PC-3 (cell line): ENCODE measurements at regions of chr18 and their contacts with region 1.

Region 1: DNA sequence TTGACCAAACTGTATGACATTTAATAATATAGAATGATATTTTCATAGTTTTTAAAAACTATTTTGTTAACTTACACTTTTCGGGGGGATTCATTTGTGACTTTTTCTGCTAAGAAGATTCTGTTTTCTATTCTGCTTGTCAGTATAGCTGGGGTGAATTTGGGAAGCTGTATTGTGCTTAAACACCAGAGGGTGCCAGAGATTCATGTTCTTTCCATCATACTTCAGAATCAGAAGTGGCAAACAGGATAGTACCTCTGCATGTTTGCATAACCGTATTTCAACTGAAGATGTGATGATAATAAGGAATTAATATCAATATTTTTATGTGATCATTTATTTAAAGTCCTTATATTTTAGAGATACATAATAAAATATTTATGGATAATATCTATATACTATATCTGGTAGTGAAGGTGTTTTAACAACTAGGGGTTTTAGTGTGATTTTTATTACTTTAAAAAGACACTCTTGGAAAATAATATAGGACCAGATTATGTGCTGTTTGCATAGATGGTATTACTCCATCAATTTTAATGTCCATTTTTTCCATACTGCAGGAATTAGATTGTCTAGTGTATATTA is 81.0 kb downstream of the TAF4B start:
- DNase-seq: peak; percentile 75
- ATAC-seq: peak; percentile 75
- H3K4me3 ChIP-seq: no peak overlapping the region
- H3K27ac ChIP-seq: no peak overlapping the region
- H3K4me1 ChIP-seq: peaks cover 4% of the 10 kb centered on the region; the same call in 1 of the 2 replicates
- H3K27me3 ChIP-seq: no peaks in the 10 kb centered on the region
- CTCF ChIP-seq: peak; percentile 71

Region 2: GRCh38 chr18:26159353-26159752 is 147.9 kb before region 1 on chr18:
- CTCF ChIA-PET with region 1: no interaction called
- POLR2A ChIA-PET with region 1: no interaction called
- intact Hi-C with region 1: no loop called
- DNase-seq: peak; percentile 19
- ATAC-seq: no peak
- H3K4me3 ChIP-seq: no peak overlapping the region
- H3K27ac ChIP-seq: no peak overlapping the region
- H3K4me1 ChIP-seq: no peaks in the 10 kb centered on the region
- H3K27me3 ChIP-seq: peaks cover 23% of the 10 kb centered on the region; the same call in 1 of the 2 replicates
- CTCF ChIP-seq: peak; percentile 50

Region 3: DNA sequence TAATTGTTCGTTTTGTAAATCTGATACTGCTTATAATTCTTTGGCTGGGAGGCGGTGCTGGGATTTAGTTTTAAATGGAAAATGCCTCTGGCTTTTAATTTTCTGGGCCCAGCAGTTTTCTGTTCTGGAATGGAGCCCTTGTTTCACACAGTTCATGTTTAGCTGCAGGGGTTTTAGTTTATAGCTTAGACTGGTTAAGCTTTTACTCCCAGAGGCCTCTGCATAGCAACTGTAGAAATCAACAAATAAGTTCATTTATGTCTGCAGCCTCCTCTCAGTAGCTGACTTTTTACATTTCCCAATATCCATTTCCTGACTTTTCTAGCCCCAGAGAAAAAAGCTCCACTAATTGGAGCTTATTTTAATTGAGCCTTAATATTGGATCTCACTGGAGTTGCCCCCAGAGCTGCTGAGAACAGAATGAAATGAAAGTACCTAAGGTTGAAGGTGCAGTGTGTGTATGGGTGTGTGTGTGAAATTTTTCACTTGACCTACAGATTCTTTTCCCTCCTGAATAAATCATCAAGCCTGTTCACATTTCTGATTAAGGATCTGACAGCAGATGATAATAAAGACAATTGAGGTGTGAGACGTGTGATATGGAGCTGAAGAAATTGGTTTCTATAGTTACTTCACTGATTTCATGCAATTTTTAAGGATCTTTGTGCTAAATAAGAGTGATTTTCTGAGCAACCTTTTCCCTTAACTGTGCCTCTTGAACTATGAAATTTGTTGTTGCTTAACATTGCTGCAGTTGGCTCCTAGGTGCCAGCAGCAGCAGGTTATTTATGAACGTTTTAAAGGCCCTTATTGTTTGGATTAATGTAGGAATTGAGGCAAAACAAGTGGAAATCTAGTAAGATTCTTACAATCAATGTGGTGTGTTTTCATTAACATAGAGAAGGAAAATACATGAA is 28.5 kb after region 1 on chr18:
- CTCF ChIA-PET with region 1: interaction called, 9 read pairs
- POLR2A ChIA-PET with region 1: no interaction called
- intact Hi-C with region 1: loop called (anchors 1 kb)
- DNase-seq: no peak
- ATAC-seq: no peak
- H3K4me3 ChIP-seq: no peak overlapping the region
- H3K27ac ChIP-seq: no peak overlapping the region
- H3K4me1 ChIP-seq: no peaks in the 10 kb centered on the region
- H3K27me3 ChIP-seq: no peaks in the 10 kb centered on the region
- CTCF ChIP-seq: no peak

Region 4: GRCh38 chr18:26458526-26459232 is 151.4 kb after region 1 on chr18:
- CTCF ChIA-PET with region 1: no interaction called
- POLR2A ChIA-PET with region 1: no interaction called
- intact Hi-C with region 1: loop called (anchors 10 kb)
- DNase-seq: peak; percentile 20
- ATAC-seq: peak; percentile 18; the same call in 1 of the 2 replicates
- H3K4me3 ChIP-seq: no peak overlapping the region
- H3K27ac ChIP-seq: 0 out of 2 replicates have a peak overlapping the region, but pooled peaks have one; percentile 6
- H3K4me1 ChIP-seq: peaks cover 15% of the 10 kb centered on the region
- H3K27me3 ChIP-seq: no peaks in the 10 kb centered on the region
- CTCF ChIP-seq: no peak

Region 5: DNA sequence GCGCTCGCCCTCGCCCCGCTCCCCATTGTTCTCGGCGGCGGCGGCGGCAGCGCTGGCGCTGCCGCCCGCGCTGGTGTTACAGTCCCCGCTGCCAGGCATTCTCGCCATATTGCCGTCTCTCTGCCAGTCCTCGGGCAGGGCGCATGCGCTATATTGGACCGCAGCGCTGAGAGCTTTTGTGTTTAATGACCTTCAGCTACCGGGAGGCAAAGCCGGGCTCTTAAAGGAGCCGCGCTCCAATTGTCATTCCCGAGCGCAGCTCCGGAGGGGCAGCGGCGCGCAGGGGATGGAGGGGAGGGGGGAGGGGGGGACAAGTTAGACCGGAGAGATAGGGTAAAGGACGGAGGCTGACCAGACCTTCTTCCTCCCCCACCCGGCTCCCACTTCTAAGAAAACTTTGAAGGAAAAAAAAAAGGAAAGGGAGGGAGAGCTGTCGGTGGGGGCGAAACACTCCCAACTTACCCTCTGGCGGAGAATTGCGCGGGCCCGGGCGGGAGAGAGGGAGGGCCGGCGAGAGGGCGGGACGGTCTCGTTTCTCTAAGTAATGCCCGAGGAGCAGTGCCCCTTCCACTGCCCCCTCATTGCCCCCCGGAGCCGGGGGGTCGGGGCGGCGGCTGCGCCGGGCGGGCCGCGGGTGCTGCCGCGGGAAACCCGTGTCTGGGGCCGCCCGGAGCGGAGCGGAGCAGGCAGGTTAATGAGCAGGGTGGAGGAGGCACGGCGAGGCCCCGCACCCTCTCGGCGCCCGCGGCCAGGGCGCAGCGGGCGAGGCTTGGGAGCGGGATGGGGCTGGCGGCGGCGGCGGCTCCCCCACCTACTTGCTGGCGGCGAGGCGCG is 241.4 kb after region 1 on chr18 and contains the start of gene KCTD1:
- CTCF ChIA-PET with region 1: no interaction called
- POLR2A ChIA-PET with region 1: no interaction called
- intact Hi-C with region 1: loop called (anchors 2 kb)
- DNase-seq: peak; percentile 80
- ATAC-seq: peak; percentile 37
- H3K4me3 ChIP-seq: peak within 1 kb of the TSS; percentile 85
- H3K27ac ChIP-seq: peak within 1 kb of the TSS; percentile 12; the same call in 1 of the 2 replicates
- H3K4me1 ChIP-seq: peaks cover 45% of the 10 kb centered on the region
- H3K27me3 ChIP-seq: no peaks in the 10 kb centered on the region
- CTCF ChIP-seq: no peak
- total RNA-seq, gene KCTD1: 15.8 and 24.0 TPM in 2 replicates

Region 6: GRCh38 chr18:26650310-26651268 is 343.3 kb after region 1 on chr18:
- CTCF ChIA-PET with region 1: no interaction called
- POLR2A ChIA-PET with region 1: no interaction called
- intact Hi-C with region 1: loop called (anchors 1 kb)
- DNase-seq: no peak
- ATAC-seq: no peak
- H3K4me3 ChIP-seq: no peak overlapping the region
- H3K27ac ChIP-seq: no peak overlapping the region
- H3K4me1 ChIP-seq: peaks cover 2% of the 10 kb centered on the region
- H3K27me3 ChIP-seq: peaks cover 11% of the 10 kb centered on the region
- CTCF ChIP-seq: no peak